Activated CD4-positive, alpha-beta T cell treated with anti-CD3 and anti-CD28 coated beads, Interleukin-2, amount 10 ng/mL, durations not matched to agents 24 days and 14 days (primary cell): ENCODE measurements at regions of chr18 and their contacts with region 1.

Region 1: GRCh38 chr18:38611036-38611964 is 1045.7 kb upstream of the CELF4 start:
- DNase-seq: peak; percentile 55
- H3K4me3 Mint-ChIP-seq: peak overlapping the region; percentile 10
- H3K27ac Mint-ChIP-seq: peak overlapping the region; percentile 84
- H3K4me1 Mint-ChIP-seq: peaks cover 3% of the 10 kb centered on the region
- H3K27me3 Mint-ChIP-seq: no peaks in the 10 kb centered on the region

Region 2: DNA sequence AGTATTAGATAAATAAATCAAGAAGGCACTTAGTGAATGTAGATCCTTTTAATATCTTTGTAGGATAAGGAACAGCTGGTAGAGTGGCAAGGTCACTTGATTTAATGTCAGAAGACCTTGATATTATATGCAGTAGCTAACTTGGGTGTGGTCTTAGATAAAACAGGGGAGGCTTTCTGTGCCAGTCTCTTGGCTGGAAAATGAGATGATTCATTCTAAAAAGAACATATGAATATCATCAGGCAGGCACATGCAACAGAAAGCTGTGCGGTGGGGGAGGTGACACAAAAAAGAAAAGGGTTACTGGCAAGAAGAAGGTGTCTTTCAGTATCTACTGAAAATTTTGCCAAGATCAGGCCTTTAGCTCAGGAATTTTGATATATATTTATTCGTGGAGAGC is 114.0 kb before region 1 on chr18:
- intact Hi-C with region 1: loop called (anchors 2 kb)
- DNase-seq: no peak
- H3K4me3 Mint-ChIP-seq: no peak overlapping the region
- H3K27ac Mint-ChIP-seq: no peak overlapping the region
- H3K4me1 Mint-ChIP-seq: peaks cover 2% of the 10 kb centered on the region
- H3K27me3 Mint-ChIP-seq: no peaks in the 10 kb centered on the region

Region 3: DNA sequence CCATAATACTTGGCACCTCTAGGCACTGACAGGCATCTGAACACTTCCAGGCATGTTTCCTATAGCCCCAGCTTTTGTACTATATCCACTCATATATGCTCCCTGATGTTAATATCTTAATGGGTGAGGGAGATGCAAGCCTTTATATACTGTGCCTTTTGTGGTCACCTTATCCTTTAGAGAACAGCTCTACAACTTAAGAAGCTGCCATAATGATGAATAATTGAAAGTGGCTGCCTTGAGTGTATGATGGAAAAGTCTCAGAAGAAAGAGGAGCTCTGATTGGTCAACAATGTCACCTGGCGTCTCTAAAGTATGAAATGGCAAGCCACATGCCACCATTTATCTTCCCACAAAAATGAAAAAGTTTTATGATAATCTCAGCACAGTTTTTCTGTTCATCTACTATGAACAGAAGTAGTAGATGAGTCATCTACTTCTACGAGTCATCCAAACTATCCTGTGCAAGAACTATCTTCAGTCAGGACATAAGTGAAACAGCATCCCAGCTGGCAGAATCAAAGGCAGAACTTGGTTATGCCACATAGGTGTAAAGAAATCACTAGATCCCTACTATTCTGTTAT is 47.8 kb before region 1 on chr18:
- intact Hi-C with region 1: loop called (anchors 5 kb)
- DNase-seq: no peak
- H3K4me3 Mint-ChIP-seq: no peak overlapping the region
- H3K27ac Mint-ChIP-seq: no peak overlapping the region
- H3K4me1 Mint-ChIP-seq: peaks cover 3% of the 10 kb centered on the region
- H3K27me3 Mint-ChIP-seq: no peaks in the 10 kb centered on the region

Region 4: GRCh38 chr18:38575648-38576047 is 35.7 kb before region 1 on chr18:
- intact Hi-C with region 1: loop called (anchors 1 kb)
- DNase-seq: peak; percentile 67
- H3K4me3 Mint-ChIP-seq: peak overlapping the region; percentile 64
- H3K27ac Mint-ChIP-seq: peak overlapping the region; percentile 89
- H3K4me1 Mint-ChIP-seq: peaks cover 21% of the 10 kb centered on the region
- H3K27me3 Mint-ChIP-seq: no peaks in the 10 kb centered on the region

Region 5: DNA sequence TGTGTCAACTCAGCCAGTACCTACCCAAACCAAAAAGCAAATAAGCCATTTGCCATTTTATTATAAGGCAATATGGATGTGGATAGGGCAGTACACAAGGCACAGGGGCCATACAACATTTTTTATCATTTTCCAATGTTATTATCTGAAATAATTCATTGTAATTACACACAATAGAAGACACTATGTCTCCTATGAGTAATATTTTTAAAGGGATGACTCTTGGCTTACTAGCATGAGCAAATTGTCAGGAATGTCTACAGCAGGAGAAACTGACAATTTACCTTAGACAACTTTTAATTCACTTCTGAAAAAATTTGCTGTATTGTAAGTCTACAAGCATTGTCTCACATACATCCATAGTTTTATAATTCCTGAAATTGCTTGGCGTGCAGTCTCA is 148.2 kb after region 1 on chr18:
- intact Hi-C with region 1: no loop called
- DNase-seq: no peak
- H3K4me3 Mint-ChIP-seq: no peak overlapping the region
- H3K27ac Mint-ChIP-seq: no peak overlapping the region
- H3K4me1 Mint-ChIP-seq: no peaks in the 10 kb centered on the region
- H3K27me3 Mint-ChIP-seq: no peaks in the 10 kb centered on the region